Common myeloid progenitor, CD34-positive (primary cell): ENCODE measurements at regions of chr17 and their contacts with region 1.

Region 1: GRCh38 chr17:69607162-69607834 is 192.8 kb downstream of the MAP2K6 start:
- DNase-seq: peak; percentile 51 to 74 (median 65)
- H3K4me3 ChIP-seq: no peak overlapping the region
- H3K27ac ChIP-seq: no peak overlapping the region
- H3K4me1 ChIP-seq: peaks cover 0 to 26% (median 15%) of the 10 kb centered on the region in 4 experiments
- H3K27me3 ChIP-seq: no peaks in the 10 kb centered on the region

Region 2: GRCh38 chr17:70144260-70144846 is 537.1 kb after region 1 on chr17:
- CTCF ChIA-PET with region 1: interaction called, 12 read pairs
- POLR2A ChIA-PET with region 1: no interaction called
- DNase-seq: peak; percentile 45 to 58 (median 50)
- H3K4me3 ChIP-seq: no peak overlapping the region
- H3K27ac ChIP-seq: no peak overlapping the region
- H3K4me1 ChIP-seq: peaks cover 0 to 3% (median 0%) of the 10 kb centered on the region in 4 experiments
- H3K27me3 ChIP-seq: no peaks in the 10 kb centered on the region

Region 3: GRCh38 chr17:70168977-70169708 is 561.8 kb after region 1 on chr17 and contains the start of gene KCNJ2:
- CTCF ChIA-PET with region 1: interaction called, 11 read pairs
- POLR2A ChIA-PET with region 1: no interaction called
- DNase-seq: peak; percentile 84 to 95 (median 94)
- H3K4me3 ChIP-seq: peak within 1 kb of the TSS; percentile 52 to 84 (median 70)
- H3K27ac ChIP-seq: no peak within 1 kb of the TSS
- H3K4me1 ChIP-seq: peaks cover 2 to 23% (median 19%) of the 10 kb centered on the region in 4 experiments
- H3K27me3 ChIP-seq: peaks cover 2 to 31% (median 10%) of the 10 kb centered on the region in 5 experiments

Region 4: GRCh38 chr17:70552230-70552981 is 945.1 kb after region 1 on chr17:
- CTCF ChIA-PET with region 1: interaction called, 12 read pairs
- POLR2A ChIA-PET with region 1: no interaction called
- DNase-seq: peak; percentile 64 to 79 (median 77)
- H3K4me3 ChIP-seq: no peak overlapping the region
- H3K27ac ChIP-seq: no peak overlapping the region
- H3K4me1 ChIP-seq: no peaks in the 10 kb centered on the region
- H3K27me3 ChIP-seq: no peaks in the 10 kb centered on the region